Activated CD8-positive, alpha-beta T cell treated with anti-CD3 and anti-CD28 coated beads for 36 hours (primary cell): ENCODE measurements at regions of chr5 and their contacts with region 1.

Region 1: DNA sequence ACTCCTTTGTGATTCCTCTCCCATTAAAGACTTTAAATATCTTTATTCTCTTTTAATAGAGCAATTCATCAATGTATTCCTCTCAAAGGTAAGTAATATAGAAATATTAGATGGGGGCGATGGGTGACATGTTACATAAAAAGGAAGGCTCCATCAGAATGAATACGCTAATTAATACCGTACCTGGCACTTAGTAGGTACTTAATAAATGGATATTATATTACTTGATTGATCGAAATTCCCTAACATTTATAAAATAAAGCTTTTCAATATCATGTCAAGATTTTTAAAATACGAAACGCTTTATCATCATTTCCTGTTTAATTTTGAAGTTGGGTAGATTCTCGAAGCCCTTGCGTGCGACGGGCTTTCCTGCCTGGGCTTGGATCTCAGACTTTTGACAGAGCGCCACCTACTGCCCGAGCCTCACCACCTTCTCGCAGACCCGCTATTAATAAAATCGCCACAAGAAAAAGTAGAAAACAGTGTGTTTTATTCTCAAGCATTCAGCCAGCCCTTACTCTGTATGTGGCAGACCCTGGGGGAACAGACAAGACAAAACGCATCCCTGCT is 99.4 kb downstream of the C5orf15 start:
- DNase-seq: peak; percentile 94
- ATAC-seq: peak; percentile 87
- H3K4me3 Mint-ChIP-seq: no peak overlapping the region
- H3K27ac Mint-ChIP-seq: peak overlapping the region; percentile 9
- H3K4me1 Mint-ChIP-seq: peaks cover 24% of the 10 kb centered on the region
- H3K27me3 Mint-ChIP-seq: peaks cover 1% of the 10 kb centered on the region
- CTCF ChIP-seq: peak; percentile 85

Region 2: GRCh38 chr5:133423618-133424282 is 445.3 kb before region 1 on chr5:
- CTCF ChIA-PET with region 1: interaction called, 13 read pairs
- POLR2A ChIA-PET with region 1: no interaction called
- intact Hi-C with region 1: no loop called
- DNase-seq: peak; percentile 78
- ATAC-seq: peak; percentile 94
- H3K4me3 Mint-ChIP-seq: no peak overlapping the region
- H3K27ac Mint-ChIP-seq: no peak overlapping the region
- H3K4me1 Mint-ChIP-seq: peaks cover 9% of the 10 kb centered on the region
- H3K27me3 Mint-ChIP-seq: peaks cover 14% of the 10 kb centered on the region
- CTCF ChIP-seq: peak; percentile 98

Region 3: GRCh38 chr5:133552931-133553525 is 316.0 kb before region 1 on chr5:
- CTCF ChIA-PET with region 1: interaction called, 7 read pairs
- POLR2A ChIA-PET with region 1: no interaction called
- intact Hi-C with region 1: loop called (anchors 5 kb)
- DNase-seq: peak; percentile 71
- ATAC-seq: peak; percentile 92
- H3K4me3 Mint-ChIP-seq: no peak overlapping the region
- H3K27ac Mint-ChIP-seq: no peak overlapping the region
- H3K4me1 Mint-ChIP-seq: no peaks in the 10 kb centered on the region
- H3K27me3 Mint-ChIP-seq: peaks cover 24% of the 10 kb centered on the region
- CTCF ChIP-seq: peak; percentile 80

Region 4: GRCh38 chr5:133839721-133840120 is 29.3 kb before region 1 on chr5:
- CTCF ChIA-PET with region 1: interaction called, 23 read pairs
- POLR2A ChIA-PET with region 1: no interaction called
- intact Hi-C with region 1: no loop called
- DNase-seq: no peak
- ATAC-seq: no peak
- H3K4me3 Mint-ChIP-seq: no peak overlapping the region
- H3K27ac Mint-ChIP-seq: no peak overlapping the region
- H3K4me1 Mint-ChIP-seq: no peaks in the 10 kb centered on the region
- H3K27me3 Mint-ChIP-seq: peaks cover 3% of the 10 kb centered on the region
- CTCF ChIP-seq: no peak

Region 5: GRCh38 chr5:133881576-133882388 is 12.8 kb after region 1 on chr5:
- CTCF ChIA-PET with region 1: interaction called, 25 read pairs
- POLR2A ChIA-PET with region 1: interaction called, 6 read pairs
- intact Hi-C with region 1: no loop called
- DNase-seq: no peak
- ATAC-seq: no peak
- H3K4me3 Mint-ChIP-seq: no peak overlapping the region
- H3K27ac Mint-ChIP-seq: no peak overlapping the region
- H3K4me1 Mint-ChIP-seq: no peaks in the 10 kb centered on the region
- H3K27me3 Mint-ChIP-seq: peaks cover 10% of the 10 kb centered on the region
- CTCF ChIP-seq: no peak

Region 6: DNA sequence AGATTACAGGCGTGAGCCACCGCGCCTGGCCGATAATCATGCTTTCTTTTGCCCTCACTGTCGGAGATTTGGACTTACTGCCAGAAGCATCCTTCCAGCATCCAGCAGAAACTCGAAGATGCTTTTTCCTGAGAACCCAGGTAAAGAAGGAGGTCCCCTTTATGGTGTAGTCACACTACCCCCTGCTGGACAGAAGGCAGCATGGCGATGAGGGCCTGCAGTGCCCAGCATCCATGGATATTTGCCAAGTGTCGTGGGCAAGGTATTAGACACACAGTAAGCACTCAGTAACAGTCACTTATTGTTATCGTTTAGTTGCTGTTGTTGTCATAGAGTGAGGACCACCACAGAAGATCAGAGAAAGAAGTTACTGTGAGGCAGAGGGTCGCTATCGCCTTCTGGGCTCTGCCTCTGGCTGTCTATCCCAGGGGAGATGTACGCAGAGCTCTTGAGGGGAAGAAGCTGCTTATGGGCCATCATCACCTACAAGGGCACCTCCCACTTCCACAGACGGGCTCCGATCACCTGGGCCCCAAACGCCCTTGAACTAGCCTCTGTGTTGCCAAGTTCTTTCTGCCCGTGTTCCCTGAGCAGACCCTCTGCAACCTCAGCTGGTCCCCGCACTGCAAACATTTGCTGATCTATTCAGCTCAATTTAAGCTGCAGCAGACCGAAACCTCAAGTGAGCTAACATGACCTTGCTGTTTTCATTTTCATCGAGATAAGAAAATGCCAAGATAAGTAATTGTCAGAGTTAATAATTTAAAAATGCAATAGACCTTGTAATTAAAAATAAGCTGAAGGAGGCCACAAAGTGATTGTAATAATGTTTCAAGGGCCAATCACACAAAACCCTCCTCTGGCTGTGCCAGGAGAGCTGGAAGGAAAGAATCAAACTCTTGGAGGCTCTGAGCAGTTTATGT is 75.5 kb after region 1 on chr5:
- CTCF ChIA-PET with region 1: interaction called, 10 read pairs
- POLR2A ChIA-PET with region 1: no interaction called
- intact Hi-C with region 1: no loop called
- DNase-seq: peak; percentile 70
- ATAC-seq: peak; percentile 93
- H3K4me3 Mint-ChIP-seq: no peak overlapping the region
- H3K27ac Mint-ChIP-seq: no peak overlapping the region
- H3K4me1 Mint-ChIP-seq: peaks cover 3% of the 10 kb centered on the region
- H3K27me3 Mint-ChIP-seq: no peaks in the 10 kb centered on the region
- CTCF ChIP-seq: peak; percentile 74

Region 7: DNA sequence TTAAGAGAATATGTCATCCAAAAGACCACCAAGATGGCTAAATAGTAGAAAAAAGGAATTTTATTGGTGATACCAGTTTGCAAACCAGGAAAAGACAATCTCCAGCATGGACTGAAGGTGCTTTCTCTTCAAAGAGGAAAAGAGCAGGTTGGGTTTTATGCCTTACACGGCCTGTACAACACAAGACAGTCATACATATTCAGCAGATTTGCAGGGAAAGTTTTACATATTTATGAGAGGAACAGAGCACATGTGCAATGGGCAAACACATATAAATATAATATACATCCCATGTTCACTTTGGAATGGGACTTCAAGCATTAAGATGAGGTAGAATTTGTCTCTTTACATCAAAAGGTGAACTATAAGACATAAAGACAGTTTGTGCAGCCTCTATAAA is 427.2 kb after region 1 on chr5:
- CTCF ChIA-PET with region 1: no interaction called
- POLR2A ChIA-PET with region 1: no interaction called
- intact Hi-C with region 1: no loop called
- DNase-seq: no peak
- ATAC-seq: no peak
- H3K4me3 Mint-ChIP-seq: no peak overlapping the region
- H3K27ac Mint-ChIP-seq: no peak overlapping the region
- H3K4me1 Mint-ChIP-seq: no peaks in the 10 kb centered on the region
- H3K27me3 Mint-ChIP-seq: peaks cover 1% of the 10 kb centered on the region
- CTCF ChIP-seq: no peak